ENCODE measurements at regions of chr2 and their contacts with region 1.

Region 1: GRCh38 chr2:226228080-226228479 is 571.5 kb downstream of the IRS1 start:
- DNase-seq: no peak
- H3K4me3 ChIP-seq: no peak overlapping the region
- H3K27ac ChIP-seq: no peak overlapping the region
- H3K4me1 ChIP-seq: no peaks in the 10 kb centered on the region
- H3K27me3 ChIP-seq: no peaks in the 10 kb centered on the region
- CTCF ChIP-seq: no peak

Region 2: DNA sequence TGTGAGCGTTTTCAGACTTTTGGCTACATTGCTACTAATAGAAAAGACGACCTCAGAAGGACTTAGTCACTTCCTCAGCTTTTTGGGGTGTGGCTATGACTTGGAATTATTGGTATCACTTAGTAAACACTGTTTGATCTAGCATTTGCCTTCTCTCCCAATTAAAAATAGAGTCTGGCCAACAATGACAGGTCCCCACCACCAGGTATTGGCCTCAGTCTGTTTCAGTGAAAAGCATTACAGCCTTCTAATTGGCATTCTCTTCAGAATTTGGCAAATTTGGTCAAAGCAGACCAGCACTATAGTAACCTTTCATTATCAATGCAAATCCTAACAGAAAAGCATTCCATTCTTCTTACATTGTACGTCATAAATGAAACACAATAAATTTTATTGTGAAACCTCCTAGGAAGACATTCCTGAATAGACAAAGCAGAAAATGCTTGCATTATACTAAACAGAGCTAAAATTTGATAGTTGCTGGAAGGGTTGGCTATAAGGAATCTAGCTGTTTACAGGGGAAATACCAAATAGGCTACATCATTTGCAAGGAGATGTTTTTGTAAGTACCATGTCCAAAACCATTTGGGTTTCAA is 42.4 kb before region 1 on chr2:
- CTCF ChIA-PET with region 1: interaction called, 12 read pairs
- POLR2A ChIA-PET with region 1: no interaction called
- intact Hi-C with region 1: no loop called
- DNase-seq: peak; percentile 87
- H3K4me3 ChIP-seq: peak overlapping the region; percentile 6
- H3K27ac ChIP-seq: peak overlapping the region; percentile 84
- H3K4me1 ChIP-seq: peaks cover 40% of the 10 kb centered on the region
- H3K27me3 ChIP-seq: no peaks in the 10 kb centered on the region
- CTCF ChIP-seq: no peak

Region 3: GRCh38 chr2:227503433-227504406 is 1275.6 kb after region 1 on chr2:
- CTCF ChIA-PET with region 1: no interaction called
- POLR2A ChIA-PET with region 1: no interaction called
- intact Hi-C with region 1: no loop called
- DNase-seq: no peak
- H3K4me3 ChIP-seq: no peak overlapping the region
- H3K27ac ChIP-seq: no peak overlapping the region
- H3K4me1 ChIP-seq: peaks cover 9% of the 10 kb centered on the region
- H3K27me3 ChIP-seq: no peaks in the 10 kb centered on the region
- CTCF ChIP-seq: no peak

Measured in A673 (cell line).